Posterior vena cava (tissue), 2 donors: ENCODE measurements at regions of chr12 and their contacts with region 1.

Region 1: DNA sequence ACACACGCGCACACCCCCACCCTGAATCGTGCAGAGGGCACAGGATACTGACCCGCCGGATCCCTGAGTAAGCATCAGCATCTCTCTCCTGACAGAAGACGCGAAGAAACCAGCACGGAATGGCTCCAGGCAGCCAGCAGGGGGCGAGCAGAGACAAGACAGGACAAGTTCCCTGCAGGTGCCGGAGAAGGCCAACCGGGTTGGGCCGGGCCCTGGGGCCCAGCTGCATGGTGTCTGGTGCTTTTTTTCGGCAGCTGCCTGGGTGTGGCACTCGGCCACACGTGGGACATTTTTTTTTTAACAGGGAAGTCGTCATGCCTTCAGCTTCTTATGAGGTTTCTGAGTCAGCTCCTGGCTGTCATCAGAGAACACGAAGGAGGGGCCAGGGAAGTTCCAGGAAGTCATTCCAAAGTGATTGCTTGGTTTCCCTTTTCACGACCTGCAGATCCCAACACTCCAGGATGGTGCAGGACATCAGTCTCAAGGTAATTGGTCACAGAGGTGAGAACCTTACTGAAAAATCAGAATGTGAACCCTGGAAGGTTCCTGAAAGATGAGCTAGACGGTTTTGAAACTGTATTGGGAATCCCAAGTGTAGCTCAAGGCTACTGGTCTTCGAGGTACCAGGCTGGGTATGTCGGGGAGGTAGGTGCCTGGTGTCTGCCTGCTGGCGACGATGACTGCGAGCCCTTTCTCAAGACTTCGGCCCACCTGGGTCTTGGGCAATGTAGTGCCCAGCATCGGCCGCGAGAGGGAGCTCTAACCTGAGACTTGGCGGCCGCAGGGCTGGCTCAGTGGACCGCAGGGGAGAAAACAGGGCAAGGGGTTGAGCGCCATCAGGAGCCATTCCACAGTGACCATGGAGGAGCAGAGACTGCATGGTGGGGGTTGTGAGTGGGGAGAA is 190.8 kb upstream of the PRMT8 start:
- DNase-seq: peak; percentile 96

Region 2: GRCh38 chr12:3200032-3200617 is 100.1 kb before region 1 on chr12:
- intact Hi-C with region 1: no loop called
- DNase-seq: no peak

Region 3: DNA sequence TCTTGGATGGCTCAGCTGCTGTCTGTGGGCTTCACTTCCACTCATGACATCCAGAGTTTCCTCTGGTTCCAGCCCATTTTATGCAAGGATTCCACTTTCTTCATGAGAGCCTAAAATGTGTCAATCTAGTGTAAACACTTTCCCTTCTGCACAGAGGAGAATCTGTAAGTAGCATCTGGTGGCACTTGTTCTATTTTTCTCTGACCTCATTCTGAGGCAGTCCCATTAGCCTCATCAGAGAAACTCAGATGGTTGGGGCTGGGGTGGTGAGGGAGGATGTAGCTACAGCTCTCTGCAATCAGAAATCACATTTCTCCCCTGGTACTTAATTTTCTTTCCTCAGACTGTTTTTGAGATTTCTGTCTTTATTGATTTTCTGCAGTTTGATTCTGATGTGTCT is 272.4 kb after region 1 on chr12:
- intact Hi-C with region 1: no loop called
- DNase-seq: no peak

Region 4: GRCh38 chr12:3777206-3777809 is 477.1 kb after region 1 on chr12:
- intact Hi-C with region 1: loop called (anchors 5 to 10 kb)
- DNase-seq: no peak

Region 5: DNA sequence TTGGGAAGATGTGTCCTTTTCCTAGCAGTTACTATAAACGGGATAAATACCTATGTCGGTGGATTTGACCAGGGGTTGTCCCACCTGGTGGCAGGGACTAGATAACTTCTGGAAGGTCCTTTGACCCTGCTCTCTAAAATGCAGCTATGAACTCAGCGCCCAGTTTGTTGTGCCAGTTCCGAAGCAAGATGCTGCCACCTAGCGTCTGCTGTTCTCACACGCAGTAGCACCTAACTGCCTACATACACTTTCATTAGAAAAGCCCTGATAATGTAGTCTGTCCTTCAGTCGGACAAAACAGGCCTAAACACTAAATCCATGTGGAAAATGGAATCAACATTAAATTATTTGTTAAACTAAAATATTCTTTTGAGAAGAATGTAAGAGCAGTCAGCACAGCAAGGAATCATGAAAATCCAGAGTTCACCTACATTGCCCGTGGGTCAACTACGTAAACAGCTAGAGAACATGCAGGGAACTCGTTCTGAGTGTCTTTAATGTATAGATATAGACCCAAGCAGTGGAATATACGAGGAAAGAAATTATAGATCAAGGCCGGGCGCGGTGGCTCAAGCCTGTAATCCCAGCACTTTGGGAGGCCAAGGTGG is 503.8 kb after region 1 on chr12:
- intact Hi-C with region 1: loop called in 1 of 2 experiments (anchors 10 kb)
- DNase-seq: peak; percentile 86